ENCODE measurements at regions of chr19 and their contacts with region 1.

Region 1: GRCh38 chr19:55503502-55504251 is 15.4 kb downstream of the SSC5D start:
- DNase-seq: peak; percentile 80
- ATAC-seq: peak; percentile 99
- H3K4me3 ChIP-seq: peak overlapping the region; percentile 43; the same call in 1 of the 2 replicates
- H3K27ac ChIP-seq: peak overlapping the region; percentile 80
- H3K4me1 ChIP-seq: peaks cover 5% of the 10 kb centered on the region
- H3K27me3 ChIP-seq: no peaks in the 10 kb centered on the region
- CTCF ChIP-seq: peak; percentile 94 to 99 (median 95)
- EP300 ChIP-seq: no peak
- POLR2A ChIP-seq: peak; percentile 50; the same call in 1 of the 2 replicates
- RAD21 ChIP-seq: peak; percentile 90

Region 2: DNA sequence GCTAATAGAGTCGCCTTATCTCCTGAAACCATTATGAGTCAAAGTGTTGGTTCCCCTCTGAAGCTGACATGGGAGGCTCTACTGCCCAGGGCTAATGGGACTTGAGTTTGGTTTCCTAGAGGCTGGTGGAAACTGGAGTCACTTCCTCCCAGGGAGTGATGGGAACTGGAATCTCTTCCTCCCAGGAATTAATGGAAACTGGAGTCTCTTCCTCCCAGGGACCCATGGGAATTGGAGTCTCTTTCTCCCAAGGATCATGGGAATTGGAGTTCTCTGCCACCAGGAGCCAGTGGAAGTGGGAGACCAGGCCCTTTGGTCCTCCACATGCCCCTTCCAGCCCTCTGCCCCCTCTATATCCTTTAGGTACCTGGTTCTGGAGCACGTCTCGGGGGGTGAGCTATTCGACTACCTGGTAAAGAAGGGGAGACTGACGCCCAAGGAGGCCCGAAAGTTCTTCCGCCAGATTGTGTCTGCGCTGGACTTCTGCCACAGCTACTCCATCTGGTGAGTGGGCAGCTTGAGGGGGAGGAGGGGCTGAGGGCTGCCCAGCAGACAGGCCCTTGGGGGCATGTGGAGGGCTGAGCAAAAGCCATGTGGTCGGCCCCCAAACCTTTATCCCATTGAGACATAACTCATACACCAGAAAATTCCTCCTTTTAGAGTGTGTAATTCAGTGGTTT is 214.4 kb before region 1 on chr19:
- CTCF ChIA-PET with region 1: interaction called, 18 read pairs
- POLR2A ChIA-PET with region 1: no interaction called
- RAD21 ChIA-PET with region 1: interaction called, 6 read pairs
- SMC1A ChIA-PET with region 1: interaction called, 6 read pairs
- in situ Hi-C with region 1: no loop called
- intact Hi-C with region 1: no loop called
- DNase-seq: no peak
- ATAC-seq: no peak
- H3K4me3 ChIP-seq: no peak overlapping the region
- H3K27ac ChIP-seq: no peak overlapping the region
- H3K4me1 ChIP-seq: no peaks in the 10 kb centered on the region
- H3K27me3 ChIP-seq: no peaks in the 10 kb centered on the region
- CTCF ChIP-seq: no peak
- EP300 ChIP-seq: no peak
- POLR2A ChIP-seq: no peak
- RAD21 ChIP-seq: no peak

Region 3: GRCh38 chr19:55461259-55461973 is 42.3 kb before region 1 on chr19 and contains the start of gene ISOC2:
- CTCF ChIA-PET with region 1: interaction called, 88 read pairs
- POLR2A ChIA-PET with region 1: interaction called, 4 read pairs
- RAD21 ChIA-PET with region 1: interaction called, 34 read pairs
- SMC1A ChIA-PET with region 1: interaction called, 19 read pairs
- in situ Hi-C with region 1: no loop called
- intact Hi-C with region 1: no loop called
- DNase-seq: peak; percentile 98
- ATAC-seq: peak; percentile 99
- H3K4me3 ChIP-seq: peak within 1 kb of the TSS; percentile 96
- H3K27ac ChIP-seq: peak within 1 kb of the TSS; percentile 94
- H3K4me1 ChIP-seq: no peaks in the 10 kb centered on the region
- H3K27me3 ChIP-seq: no peaks in the 10 kb centered on the region
- CTCF ChIP-seq: no peak
- EP300 ChIP-seq: no peak
- POLR2A ChIP-seq: peak; percentile 96
- RAD21 ChIP-seq: no peak
- polyA plus RNA-seq, gene ISOC2: 0.72 to 3.0 TPM

Region 4: DNA sequence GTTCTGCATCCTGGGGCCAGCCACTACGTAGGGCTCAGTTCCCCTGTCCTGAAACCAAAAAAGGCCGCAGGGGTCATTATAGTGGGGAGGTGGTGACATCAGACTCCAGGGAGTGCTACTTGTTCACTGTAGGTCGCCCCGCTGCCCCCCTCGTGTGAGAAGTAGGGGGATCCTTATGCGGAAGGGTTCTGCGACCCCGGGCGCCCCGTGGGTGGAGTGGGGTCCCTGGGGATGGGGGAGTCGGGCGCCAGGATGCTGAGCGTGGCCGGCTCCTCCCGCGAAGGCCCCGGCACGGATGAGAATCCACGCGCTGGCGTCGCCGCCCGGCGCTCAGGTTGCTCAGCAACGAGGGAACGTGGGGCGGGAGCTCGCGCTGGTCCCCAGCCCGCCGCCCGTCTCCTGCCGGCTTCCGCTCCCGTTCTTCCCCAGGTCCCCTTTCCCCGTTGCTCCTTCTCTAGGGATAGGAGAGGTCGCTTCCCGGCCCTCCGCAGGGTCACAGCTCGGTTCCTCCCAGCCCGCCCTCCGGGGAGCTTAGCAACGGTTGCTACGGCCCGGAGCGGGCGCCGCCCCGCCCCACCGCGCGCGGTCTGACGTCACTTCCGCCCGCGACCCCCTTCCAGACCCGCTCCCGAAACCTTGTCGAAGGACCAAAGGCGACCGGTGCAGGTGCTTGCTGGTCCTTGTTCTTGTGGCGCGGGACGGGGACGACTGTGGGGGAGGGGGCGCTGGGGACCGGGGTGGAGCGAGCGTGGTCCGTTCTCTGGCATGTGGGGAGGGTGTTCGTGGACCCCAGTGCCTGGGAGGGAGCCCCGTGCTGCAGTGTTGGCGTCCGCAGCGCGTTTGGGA is 18.9 kb before region 1 on chr19 and contains the start of gene NAT14:
- CTCF ChIA-PET with region 1: interaction called, 22 read pairs
- POLR2A ChIA-PET with region 1: interaction called, 3 read pairs
- RAD21 ChIA-PET with region 1: interaction called, 10 read pairs
- SMC1A ChIA-PET with region 1: interaction called, 6 read pairs
- in situ Hi-C with region 1: no loop called
- intact Hi-C with region 1: no loop called
- DNase-seq: no peak
- ATAC-seq: peak; percentile 85
- H3K4me3 ChIP-seq: peak within 1 kb of the TSS; percentile 78
- H3K27ac ChIP-seq: peak within 1 kb of the TSS; percentile 58; the same call in 1 of the 2 replicates
- H3K4me1 ChIP-seq: peaks cover 8% of the 10 kb centered on the region
- H3K27me3 ChIP-seq: no peaks in the 10 kb centered on the region
- CTCF ChIP-seq: no peak
- EP300 ChIP-seq: no peak
- POLR2A ChIP-seq: peak; percentile 34
- RAD21 ChIP-seq: no peak
- polyA plus RNA-seq, gene NAT14: 0.87 to 4.7 TPM

Region 5: GRCh38 chr19:55605207-55605636 is 101.5 kb after region 1 on chr19:
- CTCF ChIA-PET with region 1: interaction called, 10 read pairs
- POLR2A ChIA-PET with region 1: no interaction called
- RAD21 ChIA-PET with region 1: interaction called, 5 read pairs
- SMC1A ChIA-PET with region 1: interaction called, 8 read pairs
- in situ Hi-C with region 1: no loop called
- intact Hi-C with region 1: no loop called
- DNase-seq: peak; percentile 94
- ATAC-seq: peak; percentile 86
- H3K4me3 ChIP-seq: peak overlapping the region; percentile 69; the same call in 1 of the 2 replicates
- H3K27ac ChIP-seq: peak overlapping the region; percentile 90
- H3K4me1 ChIP-seq: peaks cover 10% of the 10 kb centered on the region; the same call in 1 of the 2 replicates
- H3K27me3 ChIP-seq: no peaks in the 10 kb centered on the region
- CTCF ChIP-seq: no peak
- EP300 ChIP-seq: no peak
- POLR2A ChIP-seq: no peak
- RAD21 ChIP-seq: no peak